CD4-positive, alpha-beta T cell (primary cell): ENCODE measurements at regions of chr4 and their contacts with region 1.

Region 1: GRCh38 chr4:1471443-1472147 is 65.4 kb upstream of the NKX1-1 start:
- DNase-seq: no peak
- ATAC-seq: no peak
- H3K4me3 ChIP-seq: no peak overlapping the region
- H3K4me3 Mint-ChIP-seq: no peak overlapping the region
- H3K27ac ChIP-seq: no peak overlapping the region
- H3K27ac Mint-ChIP-seq: no peak overlapping the region
- H3K4me1 ChIP-seq: no peaks in the 10 kb centered on the region
- H3K4me1 Mint-ChIP-seq: no peaks in the 10 kb centered on the region
- H3K27me3 ChIP-seq: peaks cover 14 to 21% of the 10 kb centered on the region in 2 experiments
- H3K27me3 Mint-ChIP-seq: peaks cover 41% of the 10 kb centered on the region
- CTCF ChIP-seq: no peak

Region 2: GRCh38 chr4:205097-205756 is 1266.4 kb before region 1 on chr4:
- CTCF ChIA-PET with region 1: no interaction called
- POLR2A ChIA-PET with region 1: no interaction called
- intact Hi-C with region 1: no loop called
- DNase-seq: no peak
- ATAC-seq: no peak
- H3K4me3 ChIP-seq: no peak overlapping the region
- H3K4me3 Mint-ChIP-seq: no peak overlapping the region
- H3K27ac ChIP-seq: no peak overlapping the region
- H3K27ac Mint-ChIP-seq: no peak overlapping the region
- H3K4me1 ChIP-seq: peaks cover 8% of the 10 kb centered on the region
- H3K4me1 Mint-ChIP-seq: peaks cover 20% of the 10 kb centered on the region
- H3K27me3 ChIP-seq: no peaks in the 10 kb centered on the region
- H3K27me3 Mint-ChIP-seq: no peaks in the 10 kb centered on the region
- CTCF ChIP-seq: no peak

Region 3: DNA sequence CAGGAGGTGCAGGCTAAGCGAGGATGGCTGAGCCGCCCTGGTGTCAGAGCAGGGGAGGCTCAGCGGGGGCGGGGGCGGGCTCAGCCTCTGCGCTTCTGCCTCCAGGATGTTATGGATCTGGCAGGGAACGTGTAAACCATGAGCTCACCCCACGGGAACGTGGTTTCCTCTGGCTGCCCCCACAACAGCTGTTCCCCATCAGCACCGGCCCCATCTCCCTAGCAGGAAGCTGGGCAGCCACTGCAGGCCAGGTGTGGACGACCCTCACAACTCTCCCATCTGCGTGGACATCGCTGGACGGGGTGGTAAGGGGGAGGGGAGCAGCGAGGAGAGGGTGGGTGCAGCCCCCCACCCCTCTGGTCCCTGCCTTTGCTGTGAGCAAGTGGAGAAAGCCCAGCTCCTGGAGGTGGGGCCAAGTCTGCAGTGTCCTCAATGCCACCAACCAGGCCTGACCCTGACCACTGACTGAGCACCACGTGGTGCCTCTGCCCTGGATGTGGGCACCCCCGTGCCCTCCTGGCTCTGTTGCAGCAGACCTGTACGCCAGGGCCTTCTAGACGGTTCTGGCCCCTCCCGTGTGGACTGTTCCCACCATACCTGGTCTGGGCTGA is 271.1 kb before region 1 on chr4:
- CTCF ChIA-PET with region 1: no interaction called
- POLR2A ChIA-PET with region 1: no interaction called
- intact Hi-C with region 1: no loop called
- DNase-seq: peak in 4 of 14 experiments; percentile 32 to 58 (median 37)
- ATAC-seq: no peak
- H3K4me3 ChIP-seq: peak overlapping the region; percentile 66
- H3K4me3 Mint-ChIP-seq: peak overlapping the region; percentile 83
- H3K27ac ChIP-seq: peak overlapping the region; percentile 71 to 80
- H3K27ac Mint-ChIP-seq: peak overlapping the region; percentile 97
- H3K4me1 ChIP-seq: peaks cover 65% of the 10 kb centered on the region
- H3K4me1 Mint-ChIP-seq: peaks cover 30% of the 10 kb centered on the region
- H3K27me3 ChIP-seq: no peaks in the 10 kb centered on the region
- H3K27me3 Mint-ChIP-seq: no peaks in the 10 kb centered on the region
- CTCF ChIP-seq: no peak

Region 4: DNA sequence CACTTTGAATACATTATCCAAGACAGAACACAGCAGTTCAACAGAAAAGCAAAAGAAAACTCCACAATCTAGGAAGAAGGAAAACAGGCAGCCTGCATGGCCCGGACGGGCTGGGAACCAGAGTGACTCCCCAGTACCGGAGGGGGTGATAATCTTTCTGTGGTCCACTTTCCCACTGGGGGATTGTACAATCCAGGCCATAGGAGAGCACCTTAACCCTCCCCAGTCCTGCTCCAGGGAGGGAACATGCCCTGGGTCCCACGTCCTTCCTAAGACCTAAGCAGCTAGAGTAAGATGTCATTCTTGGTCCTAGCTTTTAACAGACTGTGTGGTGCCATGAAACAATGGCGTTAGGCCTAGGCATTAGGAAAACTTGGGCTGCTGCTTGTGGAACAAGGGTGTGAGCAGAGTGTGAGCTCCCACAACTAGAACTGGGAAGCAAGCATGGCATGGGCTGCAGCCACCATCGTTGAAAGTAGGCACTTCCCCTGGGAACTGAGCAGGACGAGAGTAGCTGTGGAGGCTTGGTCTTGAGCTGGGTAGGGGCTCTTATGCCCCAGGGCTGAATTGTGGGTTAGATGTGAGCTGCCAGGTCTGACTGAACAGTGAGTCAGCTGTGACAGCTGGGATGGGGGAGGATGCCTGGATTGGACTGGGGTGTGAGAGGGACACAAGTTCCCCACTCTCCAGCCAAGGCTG is 629.9 kb after region 1 on chr4:
- CTCF ChIA-PET with region 1: no interaction called
- POLR2A ChIA-PET with region 1: no interaction called
- intact Hi-C with region 1: loop called in 1 of 2 experiments (anchors 5 kb)
- DNase-seq: no peak
- ATAC-seq: no peak
- H3K4me3 ChIP-seq: no peak overlapping the region
- H3K4me3 Mint-ChIP-seq: no peak overlapping the region
- H3K27ac ChIP-seq: no peak overlapping the region
- H3K27ac Mint-ChIP-seq: no peak overlapping the region
- H3K4me1 ChIP-seq: no peaks in the 10 kb centered on the region
- H3K4me1 Mint-ChIP-seq: no peaks in the 10 kb centered on the region
- H3K27me3 ChIP-seq: peaks cover 0 to 2% of the 10 kb centered on the region in 2 experiments
- H3K27me3 Mint-ChIP-seq: peaks cover 4% of the 10 kb centered on the region
- CTCF ChIP-seq: no peak